ENCODE measurements at regions of chr3 and their contacts with region 1.

Region 1: GRCh38 chr3:47802734-47803477 is at the start of gene DHX30:
- DNase-seq: peak; percentile 63 to 92 (median 83)
- ATAC-seq: peak; percentile 92
- H3K4me3 ChIP-seq: peak within 1 kb of the TSS; percentile 81 to 95
- H3K4me3 Mint-ChIP-seq: peak within 1 kb of the TSS; percentile 93
- H3K27ac ChIP-seq: peak within 1 kb of the TSS; percentile 73 to 82
- H3K27ac Mint-ChIP-seq: peak within 1 kb of the TSS; percentile 95
- H3K4me1 ChIP-seq: peaks cover 17% of the 10 kb centered on the region
- H3K4me1 Mint-ChIP-seq: peaks cover 21% of the 10 kb centered on the region
- H3K27me3 ChIP-seq: no peaks in the 10 kb centered on the region
- H3K27me3 Mint-ChIP-seq: no peaks in the 10 kb centered on the region
- CTCF ChIP-seq: no peak
- total RNA-seq, gene DHX30: 80.7 to 83.4 TPM

Region 2: DNA sequence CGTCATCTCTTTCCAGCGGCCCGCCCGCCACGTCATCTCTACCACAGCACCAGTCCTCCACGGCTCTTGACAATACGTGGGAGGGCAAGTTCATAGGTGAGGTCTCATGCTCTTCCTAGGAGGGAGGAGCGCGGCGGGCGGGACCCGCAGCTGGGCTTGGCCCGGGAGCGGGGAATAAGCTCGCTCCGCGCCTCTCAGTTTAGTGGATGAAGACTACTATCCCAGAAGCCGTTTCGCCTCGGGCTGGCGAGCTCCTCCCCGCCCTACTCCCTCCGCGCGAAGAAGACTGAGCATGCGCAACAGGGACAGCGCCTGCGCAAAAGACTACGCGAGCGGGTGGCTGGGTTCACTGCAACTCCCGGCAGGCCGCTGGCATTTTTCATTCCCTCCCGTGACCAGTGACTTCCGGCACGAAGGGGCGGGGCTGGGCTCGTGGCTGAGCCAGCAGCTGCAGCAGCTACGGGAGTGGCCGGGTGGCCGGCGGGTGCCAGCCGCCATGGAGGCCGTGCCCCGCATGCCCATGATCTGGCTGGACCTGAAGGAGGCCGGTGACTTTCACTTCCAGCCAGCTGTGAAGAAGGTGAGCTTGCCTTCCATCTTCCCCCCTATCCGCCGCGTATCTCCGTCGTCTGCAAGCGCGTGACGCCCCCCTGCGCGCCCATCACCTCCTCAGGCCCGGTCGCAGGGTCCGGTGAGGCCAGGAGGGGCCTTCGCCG is 422.1 kb before region 1 on chr3 and contains the start of gene PTPN23:
- CTCF ChIA-PET with region 1: no interaction called
- POLR2A ChIA-PET with region 1: no interaction called
- intact Hi-C with region 1: loop called (anchors 1 to 2 kb)
- DNase-seq: peak; percentile 97 to 99 (median 99)
- ATAC-seq: peak; percentile 77
- H3K4me3 ChIP-seq: peak within 1 kb of the TSS; percentile 59 to 86
- H3K4me3 Mint-ChIP-seq: peak within 1 kb of the TSS; percentile 99
- H3K27ac ChIP-seq: peak within 1 kb of the TSS; percentile 76 to 97
- H3K27ac Mint-ChIP-seq: peak within 1 kb of the TSS; percentile 100
- H3K4me1 ChIP-seq: peaks cover 30% of the 10 kb centered on the region
- H3K4me1 Mint-ChIP-seq: peaks cover 49% of the 10 kb centered on the region
- H3K27me3 ChIP-seq: no peaks in the 10 kb centered on the region
- H3K27me3 Mint-ChIP-seq: no peaks in the 10 kb centered on the region
- CTCF ChIP-seq: no peak
- total RNA-seq, gene PTPN23: 39.2 to 48.3 TPM

Region 3: DNA sequence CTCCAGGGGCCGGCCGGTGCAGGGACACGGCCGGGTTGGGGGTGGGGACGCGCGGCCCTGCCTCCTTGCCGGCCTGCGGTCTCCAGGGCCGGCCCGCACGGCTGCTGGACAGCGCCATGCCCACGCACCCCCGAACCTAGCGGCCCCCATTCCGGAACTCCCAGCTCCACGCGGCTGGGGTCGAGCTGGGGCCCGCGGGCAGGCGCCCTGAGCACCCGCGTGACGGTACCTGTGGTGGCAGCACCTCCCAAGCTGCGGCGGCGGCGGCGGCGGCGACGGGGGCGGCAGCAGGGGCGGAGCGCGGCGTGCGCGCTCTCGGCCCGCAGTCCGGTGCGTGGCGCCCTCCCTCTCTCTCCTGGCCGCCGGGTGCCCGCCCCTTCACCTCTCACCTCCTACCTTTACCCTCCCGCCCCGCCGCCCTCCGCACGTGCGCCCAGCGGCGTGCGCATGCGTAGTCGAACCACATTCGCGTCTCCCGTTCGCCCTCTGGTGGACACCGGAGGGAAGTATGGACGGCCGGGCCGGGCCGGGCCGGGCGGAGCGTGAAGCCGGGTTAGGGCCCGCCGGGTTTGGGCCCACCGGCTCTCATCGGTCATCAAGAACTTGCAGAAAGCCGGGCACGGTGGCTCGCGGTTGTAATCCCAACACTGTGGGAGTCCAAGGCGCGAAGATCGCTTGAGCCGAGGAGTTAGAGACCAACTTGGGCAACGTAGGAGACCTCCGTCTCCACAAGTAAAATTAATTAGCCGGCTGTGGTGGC is 327.2 kb before region 1 on chr3 and contains the start of gene SCAP:
- CTCF ChIA-PET with region 1: no interaction called
- POLR2A ChIA-PET with region 1: no interaction called
- intact Hi-C with region 1: loop called in 1 of 2 experiments (anchors 1 kb)
- DNase-seq: peak; percentile 90 to 98 (median 96)
- ATAC-seq: peak; percentile 90
- H3K4me3 ChIP-seq: peak within 1 kb of the TSS; percentile 58 to 83
- H3K4me3 Mint-ChIP-seq: peak within 1 kb of the TSS; percentile 93
- H3K27ac ChIP-seq: peak within 1 kb of the TSS; percentile 69 to 86
- H3K27ac Mint-ChIP-seq: peak within 1 kb of the TSS; percentile 94
- H3K4me1 ChIP-seq: peaks cover 28% of the 10 kb centered on the region
- H3K4me1 Mint-ChIP-seq: peaks cover 43% of the 10 kb centered on the region
- H3K27me3 ChIP-seq: no peaks in the 10 kb centered on the region
- H3K27me3 Mint-ChIP-seq: no peaks in the 10 kb centered on the region
- CTCF ChIP-seq: peak; percentile 97
- total RNA-seq, gene SCAP: 72.8 to 76.6 TPM

Region 4: DNA sequence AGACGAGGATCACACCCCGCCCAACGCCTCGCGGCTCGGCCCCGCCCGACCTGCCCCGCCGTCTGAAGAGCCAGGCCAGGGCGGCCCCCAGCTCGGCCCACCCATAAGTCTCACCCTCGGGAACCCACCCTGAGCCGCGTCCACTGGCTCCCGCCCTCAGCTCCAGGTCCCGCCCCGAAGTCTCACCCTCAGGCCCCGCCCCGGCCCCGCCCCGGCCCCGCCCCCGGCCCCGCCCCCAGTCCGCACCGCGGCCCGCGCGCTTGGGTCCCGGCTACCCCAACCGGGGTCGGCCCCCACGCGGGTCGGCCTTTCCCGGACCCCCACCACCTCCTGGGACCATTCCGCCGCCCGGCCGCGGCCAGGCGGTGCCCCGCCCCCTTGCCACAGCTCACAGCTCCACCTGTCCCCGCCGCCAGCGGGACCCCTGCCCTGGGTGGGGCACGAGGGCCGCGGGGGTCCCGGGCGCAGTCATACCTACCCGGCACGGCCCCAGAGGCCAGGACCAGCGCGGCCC is 224.7 kb before region 1 on chr3:
- CTCF ChIA-PET with region 1: no interaction called
- POLR2A ChIA-PET with region 1: no interaction called
- intact Hi-C with region 1: loop called in 1 of 2 experiments (anchors 5 kb)
- DNase-seq: peak in 7 of 9 experiments; percentile 9 to 65 (median 41)
- ATAC-seq: peak; percentile 74
- H3K4me3 ChIP-seq: peak overlapping the region; percentile 33 to 37
- H3K4me3 Mint-ChIP-seq: peak overlapping the region; percentile 75
- H3K27ac ChIP-seq: no peak overlapping the region
- H3K27ac Mint-ChIP-seq: no peak overlapping the region
- H3K4me1 ChIP-seq: peaks cover 7% of the 10 kb centered on the region
- H3K4me1 Mint-ChIP-seq: no peaks in the 10 kb centered on the region
- H3K27me3 ChIP-seq: peaks cover 7 to 12% of the 10 kb centered on the region in 2 experiments
- H3K27me3 Mint-ChIP-seq: peaks cover 24% of the 10 kb centered on the region
- CTCF ChIP-seq: no peak

Region 5: GRCh38 chr3:47791193-47791855 is 11.6 kb before region 1 on chr3:
- CTCF ChIA-PET with region 1: interaction called, 3 read pairs
- POLR2A ChIA-PET with region 1: no interaction called
- intact Hi-C with region 1: loop called (anchors 1 kb)
- DNase-seq: no peak
- ATAC-seq: no peak
- H3K4me3 ChIP-seq: no peak overlapping the region
- H3K4me3 Mint-ChIP-seq: no peak overlapping the region
- H3K27ac ChIP-seq: no peak overlapping the region
- H3K27ac Mint-ChIP-seq: no peak overlapping the region
- H3K4me1 ChIP-seq: no peaks in the 10 kb centered on the region
- H3K4me1 Mint-ChIP-seq: peaks cover 5% of the 10 kb centered on the region
- H3K27me3 ChIP-seq: no peaks in the 10 kb centered on the region
- H3K27me3 Mint-ChIP-seq: no peaks in the 10 kb centered on the region
- CTCF ChIP-seq: no peak